PC-3 (cell line): ENCODE measurements at regions of chr10 and their contacts with region 1.

Region 1: DNA sequence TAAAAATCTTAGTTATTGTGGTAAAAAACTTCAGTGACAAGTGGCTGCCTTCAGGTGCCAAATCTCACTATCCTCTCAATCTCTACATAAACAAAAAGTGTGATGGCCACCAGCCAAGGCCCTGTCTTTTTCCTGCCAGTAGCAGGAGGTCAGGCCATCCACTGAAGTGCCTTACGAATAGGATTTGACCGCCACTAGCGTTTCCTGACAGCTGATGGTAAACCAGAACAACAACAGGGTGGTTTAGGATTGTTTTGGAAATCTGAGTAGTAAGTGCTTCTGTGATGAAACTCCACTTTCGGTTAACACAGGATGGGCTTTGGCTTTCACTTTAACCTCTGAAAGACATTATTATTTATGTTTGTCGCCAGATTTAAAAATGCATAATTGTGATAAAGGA is 55.7 kb upstream of the OGDHL start:
- DNase-seq: no peak
- ATAC-seq: no peak
- H3K4me3 ChIP-seq: no peak overlapping the region
- H3K27ac ChIP-seq: no peak overlapping the region
- H3K4me1 ChIP-seq: no peaks in the 10 kb centered on the region
- H3K27me3 ChIP-seq: no peaks in the 10 kb centered on the region
- CTCF ChIP-seq: no peak

Region 2: DNA sequence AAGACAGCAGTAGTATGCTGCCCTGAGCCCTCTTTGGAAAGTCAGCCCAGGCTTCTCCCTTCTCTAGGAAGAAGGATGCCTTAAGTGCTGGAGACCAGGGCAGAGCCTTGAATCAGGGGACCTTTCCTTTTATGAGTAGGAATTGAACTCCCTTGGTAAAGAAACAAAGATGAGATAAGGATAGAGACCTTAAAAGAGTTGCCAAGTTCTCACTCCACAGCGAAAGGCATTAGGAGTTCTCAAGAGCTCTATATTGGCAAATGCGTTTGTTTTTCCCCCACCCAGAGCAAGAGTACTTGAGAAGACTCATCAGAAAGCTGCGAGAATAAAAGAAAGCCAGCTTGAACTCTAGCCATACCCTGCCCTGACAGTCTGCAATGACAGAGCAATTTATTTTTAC is 17.1 kb after region 1 on chr10:
- CTCF ChIA-PET with region 1: no interaction called
- POLR2A ChIA-PET with region 1: no interaction called
- intact Hi-C with region 1: loop called (anchors 2 kb)
- DNase-seq: no peak
- ATAC-seq: no peak
- H3K4me3 ChIP-seq: no peak overlapping the region
- H3K27ac ChIP-seq: no peak overlapping the region
- H3K4me1 ChIP-seq: no peaks in the 10 kb centered on the region
- H3K27me3 ChIP-seq: no peaks in the 10 kb centered on the region
- CTCF ChIP-seq: no peak